T-cell (primary cell): ENCODE measurements at regions of chr5 and their contacts with region 1.

Region 1: DNA sequence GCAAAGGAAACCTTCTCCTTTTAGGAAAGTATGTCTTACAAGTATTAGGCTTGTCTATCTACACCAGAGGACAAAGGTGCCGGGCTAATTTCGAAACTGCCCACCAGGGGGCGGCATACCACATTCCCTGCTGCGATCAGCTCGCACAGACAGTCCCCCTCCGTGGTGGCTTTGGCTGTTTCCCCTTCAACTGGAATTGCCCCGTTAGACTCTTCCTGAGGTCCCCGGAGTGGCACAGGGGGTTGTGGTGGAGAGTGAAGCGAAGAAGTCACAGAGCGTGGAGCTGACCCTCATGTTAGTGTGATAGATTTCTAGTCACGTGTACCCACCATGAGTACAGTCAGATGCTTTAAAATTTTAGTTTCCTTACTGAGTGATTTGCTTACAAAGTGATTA is 17.5 kb downstream of the PTTG1 start:
- DNase-seq: peak; percentile 60 to 94 (median 83)
- ATAC-seq: peak; percentile 81 to 88 (median 82)
- H3K4me3 ChIP-seq: peak overlapping the region; percentile 49 to 86
- H3K4me3 Mint-ChIP-seq: peak overlapping the region; percentile 82 to 89 (median 89)
- H3K27ac ChIP-seq: peak overlapping the region; percentile 48
- H3K27ac Mint-ChIP-seq: peak overlapping the region; percentile 91 to 92
- H3K4me1 ChIP-seq: peaks cover 2 to 4% of the 10 kb centered on the region in 2 experiments
- H3K4me1 Mint-ChIP-seq: peaks cover 7 to 20% (median 14%) of the 10 kb centered on the region in 3 donors
- H3K27me3 ChIP-seq: no peaks in the 10 kb centered on the region
- H3K27me3 Mint-ChIP-seq: peaks cover 6 to 10% of the 10 kb centered on the region in 2 donors

Region 2: GRCh38 chr5:160418561-160419457 is 20.4 kb before region 1 on chr5 and contains the start of gene SLU7:
- CTCF ChIA-PET with region 1: interaction called, 24 to 79 read pairs
- POLR2A ChIA-PET with region 1: interaction called, 4 read pairs
- DNase-seq: peak; percentile 84 to 96 (median 91)
- ATAC-seq: peak; percentile 81 to 84 (median 82)
- H3K4me3 ChIP-seq: peak within 1 kb of the TSS; percentile 86 to 96
- H3K4me3 Mint-ChIP-seq: peak within 1 kb of the TSS; percentile 95 to 99 (median 95)
- H3K27ac ChIP-seq: peak within 1 kb of the TSS; percentile 87
- H3K27ac Mint-ChIP-seq: peak within 1 kb of the TSS; percentile 95 to 99
- H3K4me1 ChIP-seq: peaks cover 32% of the 10 kb centered on the region in 2 experiments
- H3K4me1 Mint-ChIP-seq: peaks cover 73 to 82% (median 78%) of the 10 kb centered on the region in 3 donors
- H3K27me3 ChIP-seq: no peaks in the 10 kb centered on the region
- H3K27me3 Mint-ChIP-seq: no peaks in the 10 kb centered on the region
- total RNA-seq, gene SLU7: 64.9 to 76.8 (median 75.2) TPM

Region 3: DNA sequence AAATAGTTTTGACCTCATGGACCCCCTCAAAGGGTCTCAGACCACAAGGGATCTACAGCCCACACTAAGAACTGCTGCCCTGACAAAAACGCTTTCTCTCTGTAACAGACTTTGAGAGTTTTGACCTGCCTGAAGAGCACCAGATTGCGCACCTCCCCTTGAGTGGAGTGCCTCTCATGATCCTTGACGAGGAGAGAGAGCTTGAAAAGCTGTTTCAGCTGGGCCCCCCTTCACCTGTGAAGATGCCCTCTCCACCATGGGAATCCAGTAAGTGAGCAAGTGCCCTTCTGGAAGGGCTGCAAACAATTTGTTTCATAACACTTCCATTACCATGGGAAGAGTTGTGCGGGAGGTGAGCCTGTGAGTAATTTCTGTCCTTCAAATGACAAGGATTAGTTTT is 11.6 kb before region 1 on chr5:
- CTCF ChIA-PET with region 1: interaction called, 14 to 79 read pairs
- POLR2A ChIA-PET with region 1: no interaction called
- DNase-seq: no peak
- ATAC-seq: no peak
- H3K4me3 ChIP-seq: no peak overlapping the region
- H3K4me3 Mint-ChIP-seq: no peak overlapping the region
- H3K27ac ChIP-seq: no peak overlapping the region
- H3K27ac Mint-ChIP-seq: no peak overlapping the region
- H3K4me1 ChIP-seq: peaks cover 4 to 5% of the 10 kb centered on the region in 2 experiments
- H3K4me1 Mint-ChIP-seq: peaks cover 24 to 32% (median 26%) of the 10 kb centered on the region in 3 donors
- H3K27me3 ChIP-seq: no peaks in the 10 kb centered on the region
- H3K27me3 Mint-ChIP-seq: no peaks in the 10 kb centered on the region

Region 4: GRCh38 chr5:160460377-160461049 is 21.3 kb after region 1 on chr5:
- CTCF ChIA-PET with region 1: interaction called, 16 to 41 read pairs
- POLR2A ChIA-PET with region 1: no interaction called
- DNase-seq: no peak
- ATAC-seq: no peak
- H3K4me3 ChIP-seq: no peak overlapping the region
- H3K4me3 Mint-ChIP-seq: no peak overlapping the region
- H3K27ac ChIP-seq: no peak overlapping the region
- H3K27ac Mint-ChIP-seq: no peak overlapping the region
- H3K4me1 ChIP-seq: peaks cover 5 to 6% of the 10 kb centered on the region in 2 experiments
- H3K4me1 Mint-ChIP-seq: peaks cover 15 to 17% (median 16%) of the 10 kb centered on the region in 3 donors
- H3K27me3 ChIP-seq: no peaks in the 10 kb centered on the region
- H3K27me3 Mint-ChIP-seq: peaks cover 0 to under 1% of the 10 kb centered on the region in 2 donors

Region 5: GRCh38 chr5:160467555-160468362 is 28.6 kb after region 1 on chr5:
- CTCF ChIA-PET with region 1: interaction called, 16 to 41 read pairs
- POLR2A ChIA-PET with region 1: no interaction called
- DNase-seq: peak; percentile 44 to 86 (median 70)
- ATAC-seq: peak; percentile 80 to 89 (median 86)
- H3K4me3 ChIP-seq: peak overlapping the region; percentile 45 to 61
- H3K4me3 Mint-ChIP-seq: peak overlapping the region; percentile 88 to 96 (median 89)
- H3K27ac ChIP-seq: peak overlapping the region; percentile 77
- H3K27ac Mint-ChIP-seq: peak overlapping the region; percentile 91 to 98
- H3K4me1 ChIP-seq: peaks cover 27 to 47% of the 10 kb centered on the region in 2 experiments
- H3K4me1 Mint-ChIP-seq: peaks cover 70 to 83% (median 79%) of the 10 kb centered on the region in 3 donors
- H3K27me3 ChIP-seq: no peaks in the 10 kb centered on the region
- H3K27me3 Mint-ChIP-seq: no peaks in the 10 kb centered on the region

Region 6: GRCh38 chr5:160475864-160476438 is 36.7 kb after region 1 on chr5:
- CTCF ChIA-PET with region 1: interaction called, 4 to 13 read pairs
- POLR2A ChIA-PET with region 1: no interaction called
- DNase-seq: no peak
- ATAC-seq: no peak
- H3K4me3 ChIP-seq: no peak overlapping the region
- H3K4me3 Mint-ChIP-seq: peak overlapping the region; percentile 7 to 31 (median 26)
- H3K27ac ChIP-seq: no peak overlapping the region
- H3K27ac Mint-ChIP-seq: peak overlapping the region; percentile 74
- H3K4me1 ChIP-seq: peaks cover 30 to 59% of the 10 kb centered on the region in 2 experiments
- H3K4me1 Mint-ChIP-seq: peaks cover 44 to 82% (median 73%) of the 10 kb centered on the region in 3 donors
- H3K27me3 ChIP-seq: no peaks in the 10 kb centered on the region
- H3K27me3 Mint-ChIP-seq: no peaks in the 10 kb centered on the region

Region 7: GRCh38 chr5:160508780-160509361 is 69.7 kb after region 1 on chr5:
- CTCF ChIA-PET with region 1: interaction called, 21 to 23 read pairs
- POLR2A ChIA-PET with region 1: no interaction called
- DNase-seq: peak in 33 of 35 experiments; percentile 14 to 92 (median 49)
- ATAC-seq: peak; percentile 71 to 83 (median 80)
- H3K4me3 ChIP-seq: no peak overlapping the region
- H3K4me3 Mint-ChIP-seq: no peak overlapping the region
- H3K27ac ChIP-seq: no peak overlapping the region
- H3K27ac Mint-ChIP-seq: peak overlapping the region; percentile 76 to 79
- H3K4me1 ChIP-seq: peaks cover 0 to 29% of the 10 kb centered on the region in 2 experiments
- H3K4me1 Mint-ChIP-seq: peaks cover 30 to 44% (median 31%) of the 10 kb centered on the region in 3 donors
- H3K27me3 ChIP-seq: peaks cover 0 to 3% of the 10 kb centered on the region in 2 experiments
- H3K27me3 Mint-ChIP-seq: peaks cover 3 to 13% of the 10 kb centered on the region in 2 donors